B cell (primary cell): ENCODE measurements at regions of chr3 and their contacts with region 1.

Region 1: DNA sequence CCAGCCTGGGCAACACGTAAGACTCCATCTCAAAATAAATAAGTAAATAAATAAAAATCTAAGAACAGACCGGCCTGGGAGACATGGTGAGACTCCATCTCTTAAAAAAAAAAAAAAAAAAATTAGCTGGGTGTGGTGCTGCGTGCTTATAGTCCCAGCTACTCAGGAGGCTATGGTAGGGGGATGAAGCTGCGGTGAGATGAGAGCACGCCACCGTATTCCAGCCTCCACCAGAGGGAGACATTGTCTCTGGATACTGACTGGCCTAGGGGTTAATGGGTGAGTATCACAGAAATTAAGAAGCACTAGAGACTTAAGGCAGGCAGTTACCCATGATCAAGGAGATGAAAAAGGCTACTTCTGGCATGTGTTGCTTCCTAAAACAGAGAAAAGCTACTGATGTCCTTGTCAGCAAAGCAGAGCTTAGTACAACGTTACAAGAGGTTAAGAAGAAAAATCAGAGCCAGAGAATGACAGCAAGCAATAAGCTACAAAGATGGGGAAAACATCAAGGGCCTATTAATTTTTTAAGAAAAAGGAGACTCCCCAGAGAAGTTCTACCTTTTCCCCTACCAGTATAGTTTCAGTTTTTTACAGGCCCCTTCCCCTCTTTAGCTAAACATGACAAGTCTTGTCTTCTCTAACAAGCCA is 8.6 kb downstream of the TFRC start:
- DNase-seq: peak; percentile 87
- ATAC-seq: peak; percentile 96
- H3K4me3 ChIP-seq: no peak overlapping the region
- H3K4me3 Mint-ChIP-seq: no peak overlapping the region
- H3K27ac ChIP-seq: peak overlapping the region in 1 of 2 donors; percentile 15
- H3K27ac Mint-ChIP-seq: peak overlapping the region; percentile 67
- H3K4me1 ChIP-seq: peaks cover 0 to 10% of the 10 kb centered on the region in 2 donors
- H3K4me1 Mint-ChIP-seq: peaks cover 23% of the 10 kb centered on the region
- H3K27me3 ChIP-seq: no peaks in the 10 kb centered on the region
- H3K27me3 Mint-ChIP-seq: no peaks in the 10 kb centered on the region
- CTCF ChIP-seq: peak; percentile 89

Region 2: GRCh38 chr3:196115678-196116083 is 42.4 kb after region 1 on chr3:
- CTCF ChIA-PET with region 1: interaction called, 18 read pairs
- POLR2A ChIA-PET with region 1: interaction called, 6 read pairs
- intact Hi-C with region 1: no loop called
- DNase-seq: peak; percentile 80
- ATAC-seq: peak; percentile 66
- H3K4me3 ChIP-seq: peak overlapping the region in 2 of 5 experiments; percentile 2 to 24
- H3K4me3 Mint-ChIP-seq: no peak overlapping the region
- H3K27ac ChIP-seq: peak overlapping the region; percentile 79 to 90
- H3K27ac Mint-ChIP-seq: no peak overlapping the region
- H3K4me1 ChIP-seq: peaks cover 67 to 74% of the 10 kb centered on the region in 2 donors
- H3K4me1 Mint-ChIP-seq: peaks cover 49% of the 10 kb centered on the region
- H3K27me3 ChIP-seq: no peaks in the 10 kb centered on the region
- H3K27me3 Mint-ChIP-seq: no peaks in the 10 kb centered on the region
- CTCF ChIP-seq: no peak

Region 3: GRCh38 chr3:196179380-196180308 is 106.3 kb after region 1 on chr3:
- CTCF ChIA-PET with region 1: interaction called, 69 read pairs
- POLR2A ChIA-PET with region 1: interaction called, 7 read pairs
- intact Hi-C with region 1: no loop called
- DNase-seq: peak; percentile 85
- ATAC-seq: peak; percentile 86
- H3K4me3 ChIP-seq: peak overlapping the region in 4 of 5 experiments; percentile 18 to 48 (median 32)
- H3K4me3 Mint-ChIP-seq: peak overlapping the region; percentile 74
- H3K27ac ChIP-seq: peak overlapping the region; percentile 78 to 83
- H3K27ac Mint-ChIP-seq: peak overlapping the region; percentile 84
- H3K4me1 ChIP-seq: peaks cover 20 to 33% of the 10 kb centered on the region in 2 donors
- H3K4me1 Mint-ChIP-seq: peaks cover 28% of the 10 kb centered on the region
- H3K27me3 ChIP-seq: no peaks in the 10 kb centered on the region
- H3K27me3 Mint-ChIP-seq: no peaks in the 10 kb centered on the region
- CTCF ChIP-seq: peak; percentile 42

Region 4: GRCh38 chr3:196192036-196192523 is 118.8 kb after region 1 on chr3:
- CTCF ChIA-PET with region 1: interaction called, 467 read pairs
- POLR2A ChIA-PET with region 1: interaction called, 7 read pairs
- intact Hi-C with region 1: loop called (anchors 1 kb)
- DNase-seq: peak; percentile 92
- ATAC-seq: peak; percentile 65
- H3K4me3 ChIP-seq: no peak overlapping the region
- H3K4me3 Mint-ChIP-seq: peak overlapping the region; percentile 80
- H3K27ac ChIP-seq: peak overlapping the region; percentile 91 to 94
- H3K27ac Mint-ChIP-seq: peak overlapping the region; percentile 98
- H3K4me1 ChIP-seq: peaks cover 39 to 68% of the 10 kb centered on the region in 2 donors
- H3K4me1 Mint-ChIP-seq: peaks cover 40% of the 10 kb centered on the region
- H3K27me3 ChIP-seq: no peaks in the 10 kb centered on the region
- H3K27me3 Mint-ChIP-seq: no peaks in the 10 kb centered on the region
- CTCF ChIP-seq: no peak

Region 5: GRCh38 chr3:196207833-196208607 is 134.7 kb after region 1 on chr3:
- CTCF ChIA-PET with region 1: interaction called, 37 read pairs
- POLR2A ChIA-PET with region 1: interaction called, 3 read pairs
- intact Hi-C with region 1: no loop called
- DNase-seq: peak; percentile 74
- ATAC-seq: peak; percentile 63
- H3K4me3 ChIP-seq: peak overlapping the region; percentile 13 to 92 (median 52)
- H3K4me3 Mint-ChIP-seq: peak overlapping the region; percentile 83
- H3K27ac ChIP-seq: no peak overlapping the region
- H3K27ac Mint-ChIP-seq: peak overlapping the region; percentile 41
- H3K4me1 ChIP-seq: peaks cover 22 to 31% of the 10 kb centered on the region in 2 donors
- H3K4me1 Mint-ChIP-seq: peaks cover 34% of the 10 kb centered on the region
- H3K27me3 ChIP-seq: peaks cover 0 to 2% (median 0%) of the 10 kb centered on the region in 4 experiments
- H3K27me3 Mint-ChIP-seq: no peaks in the 10 kb centered on the region
- CTCF ChIP-seq: no peak